Right cardiac atrium (tissue), 5 donors: ENCODE measurements at regions of chr9 and their contacts with region 1.

Region 1: DNA sequence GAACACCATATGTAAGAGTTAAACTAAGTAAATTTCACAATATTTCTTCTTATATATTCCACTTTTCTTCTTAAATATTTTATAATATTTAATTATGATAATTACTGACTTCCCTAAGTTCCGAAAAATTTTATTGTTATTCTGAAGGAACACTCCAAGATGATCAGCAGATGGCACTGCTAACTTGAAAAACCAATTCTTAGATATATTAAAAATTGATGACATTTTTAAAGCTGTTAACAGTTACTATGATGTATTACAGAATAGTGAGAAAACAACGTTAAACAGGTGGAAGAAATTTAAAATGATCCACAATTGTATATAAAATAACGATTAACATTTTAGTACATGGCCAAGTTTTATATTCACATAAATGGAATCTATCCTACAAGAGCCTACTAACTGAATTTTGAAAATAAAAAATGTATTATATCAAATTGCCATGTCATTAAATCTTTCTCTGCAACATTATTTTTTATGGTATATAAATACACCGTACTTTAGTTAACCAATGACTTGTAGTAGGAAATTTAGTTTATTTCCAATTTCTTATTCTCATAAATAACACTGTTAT is 30.1 kb upstream of the MUSK start:
- DNase-seq: no peak
- ATAC-seq: no peak
- H3K4me3 ChIP-seq: no peak overlapping the region
- H3K27ac ChIP-seq: no peak overlapping the region
- H3K4me1 ChIP-seq: no peaks in the 10 kb centered on the region
- H3K27me3 ChIP-seq: no peaks in the 10 kb centered on the region

Region 2: GRCh38 chr9:110583237-110583636 is 55.2 kb before region 1 on chr9:
- intact Hi-C with region 1: no loop called
- DNase-seq: peak in 1 of 3 donors; percentile 41
- ATAC-seq: no peak
- H3K4me3 ChIP-seq: no peak overlapping the region
- H3K27ac ChIP-seq: no peak overlapping the region
- H3K4me1 ChIP-seq: no peaks in the 10 kb centered on the region
- H3K27me3 ChIP-seq: no peaks in the 10 kb centered on the region

Region 3: GRCh38 chr9:110604171-110604601 is 34.3 kb before region 1 on chr9:
- intact Hi-C with region 1: no loop called
- DNase-seq: no peak
- ATAC-seq: peak in 1 of 2 donors; percentile 32
- H3K4me3 ChIP-seq: no peak overlapping the region
- H3K27ac ChIP-seq: no peak overlapping the region
- H3K4me1 ChIP-seq: no peaks in the 10 kb centered on the region
- H3K27me3 ChIP-seq: no peaks in the 10 kb centered on the region

Region 4: GRCh38 chr9:110842169-110842568 is 203.7 kb after region 1 on chr9:
- intact Hi-C with region 1: no loop called
- DNase-seq: no peak
- ATAC-seq: no peak
- H3K4me3 ChIP-seq: no peak overlapping the region
- H3K27ac ChIP-seq: no peak overlapping the region
- H3K4me1 ChIP-seq: no peaks in the 10 kb centered on the region
- H3K27me3 ChIP-seq: no peaks in the 10 kb centered on the region

Region 5: GRCh38 chr9:111298731-111299598 is 660.5 kb after region 1 on chr9:
- intact Hi-C with region 1: loop called (anchors 5 to 10 kb)
- DNase-seq: peak; percentile 55 to 87 (median 70)
- ATAC-seq: peak; percentile 71 to 92
- H3K4me3 ChIP-seq: peak overlapping the region; percentile 25
- H3K27ac ChIP-seq: no peak overlapping the region
- H3K4me1 ChIP-seq: no peaks in the 10 kb centered on the region
- H3K27me3 ChIP-seq: no peaks in the 10 kb centered on the region

Region 6: GRCh38 chr9:111450124-111450523 is 811.7 kb after region 1 on chr9:
- intact Hi-C with region 1: no loop called
- DNase-seq: no peak
- ATAC-seq: peak in 1 of 2 donors; percentile 32
- H3K4me3 ChIP-seq: no peak overlapping the region
- H3K27ac ChIP-seq: no peak overlapping the region
- H3K4me1 ChIP-seq: peaks cover 2% of the 10 kb centered on the region
- H3K27me3 ChIP-seq: no peaks in the 10 kb centered on the region